ENCODE measurements at regions of chr19 and their contacts with region 1.

Region 1: DNA sequence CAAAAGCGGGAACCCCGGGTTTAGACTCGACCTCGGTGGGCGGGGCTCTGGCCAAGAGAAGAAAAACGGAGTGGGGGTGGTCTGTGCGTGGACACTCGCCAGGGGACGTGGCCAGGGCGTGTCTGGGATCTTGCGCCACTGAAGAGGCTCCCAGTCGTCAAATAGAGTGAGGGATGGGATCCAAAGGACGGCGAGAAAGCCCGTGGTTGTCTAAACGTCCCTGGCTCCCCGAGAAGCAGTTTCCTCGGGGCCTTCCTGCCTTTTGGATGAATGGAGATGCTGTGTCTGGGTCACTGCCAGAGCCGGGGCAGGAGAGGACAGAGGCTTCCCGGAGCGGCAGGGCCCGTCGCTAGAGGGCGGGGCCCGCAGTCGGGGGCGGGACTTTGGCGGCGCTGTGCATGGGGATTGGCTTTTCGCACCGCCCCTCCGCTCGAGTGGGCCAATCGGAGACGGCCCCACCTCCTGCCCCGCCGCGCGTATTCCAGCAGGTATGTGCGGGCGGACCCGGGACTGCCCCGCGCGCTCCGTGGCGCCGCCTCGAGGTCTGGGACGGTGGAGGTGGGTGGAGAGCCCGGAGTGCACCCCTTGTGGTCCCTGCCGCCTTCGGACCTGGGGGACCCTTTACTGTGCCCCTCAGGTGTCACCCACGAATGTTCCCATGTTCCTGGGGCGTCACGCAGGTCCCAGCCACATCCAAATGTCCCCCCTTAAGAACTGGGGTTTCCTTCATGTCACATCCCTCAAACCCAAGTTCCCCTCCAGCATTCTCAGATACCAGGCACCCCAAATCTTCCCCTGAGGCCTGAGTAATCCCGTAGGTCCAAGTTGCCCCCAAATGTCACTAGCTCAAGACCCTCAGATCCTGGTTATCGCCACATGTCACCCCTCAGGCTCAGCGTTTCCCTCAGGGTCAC is 38.3 kb downstream of the ZSWIM4 start:
- DNase-seq: peak; percentile 90 to 92 (median 91)
- H3K4me3 ChIP-seq: peak overlapping the region in 2 of 3 experiments; percentile 33 to 97
- H3K4me3 Mint-ChIP-seq: peak overlapping the region; percentile 76 to 84
- H3K27ac ChIP-seq: peak overlapping the region; percentile 99 to 100
- H3K27ac Mint-ChIP-seq: peak overlapping the region; percentile 91 to 99 (median 94)
- H3K4me1 ChIP-seq: peaks cover 56 to 59% of the 10 kb centered on the region in 2 donors
- H3K4me1 Mint-ChIP-seq: peaks cover 45% of the 10 kb centered on the region
- H3K27me3 ChIP-seq: no peaks in the 10 kb centered on the region
- H3K27me3 Mint-ChIP-seq: peaks cover 0 to 18% (median 2%) of the 10 kb centered on the region in 3 donors
- CTCF ChIP-seq: peak; percentile 45

Region 2: GRCh38 chr19:13784731-13785452 is 48.7 kb before region 1 on chr19:
- intact Hi-C with region 1: loop called in 1 of 2 experiments (anchors 5 kb)
- DNase-seq: peak; percentile 38 to 70 (median 66)
- H3K4me3 ChIP-seq: no peak overlapping the region
- H3K4me3 Mint-ChIP-seq: peak overlapping the region; percentile 54 to 67
- H3K27ac ChIP-seq: no peak overlapping the region
- H3K27ac Mint-ChIP-seq: peak overlapping the region in 3 of 7 donors; percentile 6 to 61 (median 48)
- H3K4me1 ChIP-seq: peaks cover 35 to 44% of the 10 kb centered on the region in 2 donors
- H3K4me1 Mint-ChIP-seq: peaks cover 37% of the 10 kb centered on the region
- H3K27me3 ChIP-seq: no peaks in the 10 kb centered on the region
- H3K27me3 Mint-ChIP-seq: peaks cover 0 to 3% (median 0%) of the 10 kb centered on the region in 3 donors
- CTCF ChIP-seq: peak; percentile 82

Region 3: GRCh38 chr19:13794757-13795589 is 38.6 kb before region 1 on chr19 and contains the start of gene ZSWIM4:
- intact Hi-C with region 1: loop called in 1 of 2 experiments (anchors 5 kb)
- DNase-seq: peak; percentile 98
- H3K4me3 ChIP-seq: peak within 1 kb of the TSS; percentile 57 to 91 (median 88)
- H3K4me3 Mint-ChIP-seq: peak within 1 kb of the TSS; percentile 95 to 98
- H3K27ac ChIP-seq: peak within 1 kb of the TSS; percentile 29 to 90
- H3K27ac Mint-ChIP-seq: peak within 1 kb of the TSS; percentile 85 to 98 (median 95)
- H3K4me1 ChIP-seq: peaks cover 32 to 33% of the 10 kb centered on the region in 2 donors
- H3K4me1 Mint-ChIP-seq: peaks cover 38% of the 10 kb centered on the region
- H3K27me3 ChIP-seq: no peaks in the 10 kb centered on the region
- H3K27me3 Mint-ChIP-seq: peaks cover 0 to 9% (median 0%) of the 10 kb centered on the region in 3 donors
- CTCF ChIP-seq: no peak
- polyA plus RNA-seq, gene ZSWIM4: 0.19 to 1.1 (median 0.23) TPM

Region 4: GRCh38 chr19:13846557-13847406 is 13.2 kb after region 1 on chr19:
- intact Hi-C with region 1: loop called in 1 of 2 experiments (anchors 2 kb)
- DNase-seq: peak; percentile 98 to 99 (median 99)
- H3K4me3 ChIP-seq: peak overlapping the region; percentile 39 to 65 (median 63)
- H3K4me3 Mint-ChIP-seq: peak overlapping the region; percentile 78 to 85
- H3K27ac ChIP-seq: peak overlapping the region; percentile 99
- H3K27ac Mint-ChIP-seq: peak overlapping the region; percentile 99 to 100 (median 100)
- H3K4me1 ChIP-seq: peaks cover 67 to 68% of the 10 kb centered on the region in 2 donors
- H3K4me1 Mint-ChIP-seq: peaks cover 66% of the 10 kb centered on the region
- H3K27me3 ChIP-seq: no peaks in the 10 kb centered on the region
- H3K27me3 Mint-ChIP-seq: peaks cover 0 to 5% (median 0%) of the 10 kb centered on the region in 3 donors
- CTCF ChIP-seq: no peak

Region 5: GRCh38 chr19:13905938-13906904 is 72.6 kb after region 1 on chr19 and contains the starts of genes BRME1 and CC2D1A:
- intact Hi-C with region 1: no loop called
- DNase-seq: peak; percentile 80 to 85 (median 84)
- H3K4me3 ChIP-seq: peak within 1 kb of the TSS; percentile 63 to 86 (median 86)
- H3K4me3 Mint-ChIP-seq: peak within 1 kb of the TSS; percentile 82 to 83
- H3K27ac ChIP-seq: peak within 1 kb of the TSS in 1 of 2 donors; percentile 78
- H3K27ac Mint-ChIP-seq: peak within 1 kb of the TSS; percentile 25 to 88 (median 56)
- H3K4me1 ChIP-seq: peaks cover 21 to 29% of the 10 kb centered on the region in 2 donors
- H3K4me1 Mint-ChIP-seq: peaks cover 23% of the 10 kb centered on the region
- H3K27me3 ChIP-seq: no peaks in the 10 kb centered on the region
- H3K27me3 Mint-ChIP-seq: peaks cover 0 to 2% (median 1%) of the 10 kb centered on the region in 3 donors
- CTCF ChIP-seq: no peak
- polyA plus RNA-seq, gene BRME1: 0.05 to 0.28 TPM in 2 of 3 donors, not detected in the other
- polyA plus RNA-seq, gene CC2D1A: 4.6 to 27.0 (median 6.2) TPM